Pancreas (tissue), 10 donors: ENCODE measurements at regions of chr11 and their contacts with region 1.

Region 1: GRCh38 chr11:10730151-10730550 is 20.9 kb upstream of the CTR9 start:
- DNase-seq: no peak
- ATAC-seq: no peak
- H3K4me3 ChIP-seq: no peak overlapping the region
- H3K27ac ChIP-seq: no peak overlapping the region
- H3K4me1 ChIP-seq: no peaks in the 10 kb centered on the region
- H3K27me3 ChIP-seq: no peaks in the 10 kb centered on the region
- CTCF ChIP-seq: no peak

Region 2: DNA sequence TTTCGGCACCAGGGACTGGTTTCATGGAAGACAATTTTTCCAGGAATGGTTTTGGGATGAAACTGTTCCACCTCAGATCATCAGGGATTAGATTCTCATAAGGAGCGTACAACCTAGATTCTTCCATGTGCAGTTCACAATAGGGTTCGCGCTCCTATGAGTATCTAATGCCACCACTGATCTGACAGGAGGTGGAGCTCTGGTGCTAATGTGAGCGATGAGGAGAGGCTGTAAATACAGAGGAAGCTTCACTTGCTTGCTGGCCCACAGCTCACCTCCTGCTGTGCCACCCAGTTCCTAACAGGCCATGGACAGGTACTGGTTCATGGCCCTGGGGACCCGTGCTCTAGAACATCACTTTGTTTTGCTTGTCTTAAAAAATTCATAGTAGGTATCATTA is 316.9 kb before region 1 on chr11:
- intact Hi-C with region 1: loop called in 2 of 3 experiments (anchors 5 to 10 kb)
- DNase-seq: no peak
- ATAC-seq: peak in 2 of 4 donors; percentile 62 to 67
- H3K4me3 ChIP-seq: no peak overlapping the region
- H3K27ac ChIP-seq: no peak overlapping the region
- H3K4me1 ChIP-seq: no peaks in the 10 kb centered on the region
- H3K27me3 ChIP-seq: no peaks in the 10 kb centered on the region
- CTCF ChIP-seq: no peak